ENCODE measurements at regions of chr1 and their contacts with region 1.

Region 1: DNA sequence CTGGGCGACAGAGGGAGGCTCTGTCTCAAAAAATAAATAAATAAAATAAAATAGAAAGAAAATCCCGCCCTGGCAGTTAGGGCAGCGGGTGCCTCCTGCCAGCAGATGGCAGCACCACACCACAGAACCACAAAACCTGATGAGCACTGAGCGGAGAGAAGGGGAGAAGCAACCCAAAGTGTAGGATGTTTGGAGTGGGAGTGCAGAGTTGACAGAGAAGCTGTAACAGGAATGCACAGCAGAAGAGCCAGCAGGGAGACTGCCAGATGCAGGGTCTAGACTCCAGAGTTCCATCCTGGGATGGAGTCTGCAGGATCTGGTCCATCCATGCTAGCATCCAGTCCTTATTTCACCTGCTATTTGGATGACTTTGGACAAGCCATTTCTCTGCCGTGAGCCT is 29.7 kb upstream of the KIRREL1 start:
- DNase-seq: peak; percentile 65 to 73 (median 67)
- ATAC-seq: peak; percentile 74 to 84 (median 84)
- H3K4me3 ChIP-seq: no peak overlapping the region
- H3K27ac ChIP-seq: no peak overlapping the region
- H3K4me1 ChIP-seq: peaks cover 0 to 11% (median 6%) of the 10 kb centered on the region in 4 donors
- H3K27me3 ChIP-seq: no peaks in the 10 kb centered on the region
- CTCF ChIP-seq: peak; percentile 84 to 97 (median 94)
- POLR2A ChIP-seq: no peak

Region 2: GRCh38 chr1:158095737-158096335 is 132.1 kb after region 1 on chr1:
- intact Hi-C with region 1: no loop called
- DNase-seq: no peak
- ATAC-seq: peak; percentile 47 to 77 (median 66)
- H3K4me3 ChIP-seq: no peak overlapping the region
- H3K27ac ChIP-seq: no peak overlapping the region
- H3K4me1 ChIP-seq: no peaks in the 10 kb centered on the region
- H3K27me3 ChIP-seq: no peaks in the 10 kb centered on the region
- CTCF ChIP-seq: peak; percentile 37 to 61 (median 52)
- POLR2A ChIP-seq: no peak

Region 3: DNA sequence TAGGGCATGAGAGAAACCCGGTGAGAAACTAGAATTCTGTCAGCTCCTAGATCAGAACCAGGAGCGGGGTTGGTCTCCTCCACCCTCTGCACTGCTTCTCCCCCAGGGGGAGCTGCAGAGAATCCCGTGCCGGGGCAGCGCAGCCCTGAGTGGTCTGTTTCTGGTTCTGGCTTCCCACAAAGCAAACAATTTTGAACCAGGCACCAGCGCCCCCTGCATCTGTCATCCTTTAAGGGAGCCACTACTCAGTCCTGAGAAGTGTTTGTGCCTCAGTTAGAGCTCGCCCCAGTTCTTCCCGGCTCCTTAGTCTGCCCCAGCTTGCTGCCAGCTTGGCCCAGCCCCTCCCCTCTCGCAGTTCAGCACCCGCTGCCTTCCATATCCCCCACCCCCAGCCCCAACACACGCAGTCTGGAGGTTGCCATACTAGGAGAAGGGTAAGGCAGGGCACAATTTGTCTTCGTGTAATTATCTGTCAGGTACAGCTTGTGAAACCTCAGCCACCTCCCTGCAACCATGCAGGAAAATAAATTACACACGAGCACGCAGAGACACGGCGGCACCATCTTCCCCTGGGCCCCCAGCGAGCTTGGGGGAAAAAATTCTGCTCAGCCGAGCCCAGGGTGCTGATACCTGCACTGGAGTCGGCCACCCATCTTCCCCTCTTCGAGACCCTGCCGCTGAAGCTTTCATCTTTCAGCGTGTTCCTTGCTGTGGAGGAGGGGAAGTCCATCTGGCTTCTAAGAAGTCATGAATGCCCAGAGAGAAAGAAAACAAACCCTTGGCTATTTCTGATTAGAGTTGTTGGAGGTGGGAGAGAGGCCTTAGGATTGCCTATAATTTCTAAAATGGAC is 154.4 kb after region 1 on chr1:
- intact Hi-C with region 1: loop called (anchors 10 kb)
- DNase-seq: peak in 2 of 3 donors; percentile 38 to 60
- ATAC-seq: peak; percentile 70 to 77 (median 71)
- H3K4me3 ChIP-seq: no peak overlapping the region
- H3K27ac ChIP-seq: no peak overlapping the region
- H3K4me1 ChIP-seq: peaks cover 0 to 4% (median 0%) of the 10 kb centered on the region in 4 donors
- H3K27me3 ChIP-seq: no peaks in the 10 kb centered on the region
- CTCF ChIP-seq: peak; percentile 12 to 57 (median 37)
- POLR2A ChIP-seq: no peak

Region 4: DNA sequence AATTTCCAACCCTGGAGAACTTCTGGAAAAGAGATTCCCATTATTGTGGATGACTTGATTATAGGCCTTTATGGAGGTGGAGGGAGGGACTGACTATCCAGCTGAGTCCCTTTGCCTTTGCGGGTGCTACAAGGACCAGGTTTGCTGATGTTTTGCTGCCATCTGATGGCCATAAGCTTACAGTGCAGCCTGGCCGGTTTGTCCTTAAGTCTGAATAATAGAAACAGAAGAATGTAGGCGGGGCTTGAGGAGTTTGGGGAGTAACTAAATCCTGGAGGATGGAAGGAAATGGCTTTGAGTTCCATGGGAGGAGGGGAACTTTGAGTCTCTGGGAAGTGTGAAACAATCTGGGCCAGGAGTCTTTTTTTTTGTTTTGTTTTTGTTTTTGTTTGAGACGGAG is 161.3 kb after region 1 on chr1:
- intact Hi-C with region 1: loop called in 1 of 2 experiments (anchors 10 kb)
- DNase-seq: peak in 2 of 3 donors; percentile 64 to 76
- ATAC-seq: peak; percentile 96 to 99 (median 98)
- H3K4me3 ChIP-seq: no peak overlapping the region
- H3K27ac ChIP-seq: no peak overlapping the region
- H3K4me1 ChIP-seq: no peaks in the 10 kb centered on the region
- H3K27me3 ChIP-seq: no peaks in the 10 kb centered on the region
- CTCF ChIP-seq: peak; percentile 89 to 94 (median 92)
- POLR2A ChIP-seq: no peak

Region 5: DNA sequence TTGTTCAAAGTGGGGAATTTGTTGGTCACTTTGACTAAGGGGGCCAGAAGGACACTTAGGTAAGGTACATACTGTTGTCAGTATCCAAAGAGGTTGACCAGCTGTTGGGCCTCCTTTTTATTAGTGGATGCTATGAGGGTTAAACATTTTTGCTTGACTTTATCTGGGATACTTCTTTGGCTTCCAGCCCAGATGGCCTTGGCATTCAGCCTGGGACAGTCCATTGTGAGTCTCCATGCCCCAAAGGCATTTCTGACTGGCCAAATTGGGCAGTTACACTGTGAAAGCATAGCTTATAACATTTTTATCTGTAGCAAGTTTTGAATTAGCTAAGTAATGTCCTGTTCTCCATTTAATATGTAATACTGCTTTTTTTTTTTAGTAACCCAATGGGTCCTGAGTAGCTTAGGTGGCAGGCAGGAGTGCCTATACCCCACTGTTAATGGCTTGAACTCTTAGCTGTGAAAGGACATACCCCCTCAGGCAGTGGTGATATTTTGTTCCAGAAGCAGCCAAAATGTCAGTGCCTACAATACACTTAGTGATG is 181.5 kb after region 1 on chr1:
- intact Hi-C with region 1: no loop called
- DNase-seq: peak in 2 of 3 donors; percentile 28 to 70
- ATAC-seq: no peak
- H3K4me3 ChIP-seq: no peak overlapping the region
- H3K27ac ChIP-seq: no peak overlapping the region
- H3K4me1 ChIP-seq: peaks cover 0 to 9% (median 6%) of the 10 kb centered on the region in 4 donors
- H3K27me3 ChIP-seq: no peaks in the 10 kb centered on the region
- CTCF ChIP-seq: no peak
- POLR2A ChIP-seq: no peak

Measured in right lobe of liver (tissue), 6 donors.